MCF 10A (cell line): ENCODE measurements at regions of chr14 and their contacts with region 1.

Region 1: GRCh38 chr14:92039719-92040430 is at the start of gene TRIP11:
- DNase-seq: peak; percentile 91
- H3K4me3 Mint-ChIP-seq: peak within 1 kb of the TSS; percentile 97
- H3K27ac Mint-ChIP-seq: peak within 1 kb of the TSS; percentile 99
- H3K4me1 Mint-ChIP-seq: peaks cover 20% of the 10 kb centered on the region
- H3K27me3 Mint-ChIP-seq: no peaks in the 10 kb centered on the region
- CTCF ChIP-seq: no peak
- total RNA-seq, gene TRIP11: 65.8 and 73.6 TPM in 2 replicates

Region 2: GRCh38 chr14:91872517-91873470 is 167.1 kb before region 1 on chr14:
- CTCF ChIA-PET with region 1: no interaction called
- POLR2A ChIA-PET with region 1: no interaction called
- intact Hi-C with region 1: no loop called
- DNase-seq: peak; percentile 98
- H3K4me3 Mint-ChIP-seq: no peak overlapping the region
- H3K27ac Mint-ChIP-seq: no peak overlapping the region
- H3K4me1 Mint-ChIP-seq: peaks cover 17% of the 10 kb centered on the region
- H3K27me3 Mint-ChIP-seq: no peaks in the 10 kb centered on the region
- CTCF ChIP-seq: no peak

Region 3: GRCh38 chr14:91947471-91948184 is 92.2 kb before region 1 on chr14 and contains the start of gene FBLN5:
- CTCF ChIA-PET with region 1: no interaction called
- POLR2A ChIA-PET with region 1: no interaction called
- intact Hi-C with region 1: no loop called
- DNase-seq: peak; percentile 60
- H3K4me3 Mint-ChIP-seq: peak within 1 kb of the TSS; percentile 70
- H3K27ac Mint-ChIP-seq: no peak within 1 kb of the TSS
- H3K4me1 Mint-ChIP-seq: peaks cover 11% of the 10 kb centered on the region
- H3K27me3 Mint-ChIP-seq: no peaks in the 10 kb centered on the region
- CTCF ChIP-seq: no peak
- total RNA-seq, gene FBLN5: 4.3 and 14.8 TPM in 2 replicates

Region 4: DNA sequence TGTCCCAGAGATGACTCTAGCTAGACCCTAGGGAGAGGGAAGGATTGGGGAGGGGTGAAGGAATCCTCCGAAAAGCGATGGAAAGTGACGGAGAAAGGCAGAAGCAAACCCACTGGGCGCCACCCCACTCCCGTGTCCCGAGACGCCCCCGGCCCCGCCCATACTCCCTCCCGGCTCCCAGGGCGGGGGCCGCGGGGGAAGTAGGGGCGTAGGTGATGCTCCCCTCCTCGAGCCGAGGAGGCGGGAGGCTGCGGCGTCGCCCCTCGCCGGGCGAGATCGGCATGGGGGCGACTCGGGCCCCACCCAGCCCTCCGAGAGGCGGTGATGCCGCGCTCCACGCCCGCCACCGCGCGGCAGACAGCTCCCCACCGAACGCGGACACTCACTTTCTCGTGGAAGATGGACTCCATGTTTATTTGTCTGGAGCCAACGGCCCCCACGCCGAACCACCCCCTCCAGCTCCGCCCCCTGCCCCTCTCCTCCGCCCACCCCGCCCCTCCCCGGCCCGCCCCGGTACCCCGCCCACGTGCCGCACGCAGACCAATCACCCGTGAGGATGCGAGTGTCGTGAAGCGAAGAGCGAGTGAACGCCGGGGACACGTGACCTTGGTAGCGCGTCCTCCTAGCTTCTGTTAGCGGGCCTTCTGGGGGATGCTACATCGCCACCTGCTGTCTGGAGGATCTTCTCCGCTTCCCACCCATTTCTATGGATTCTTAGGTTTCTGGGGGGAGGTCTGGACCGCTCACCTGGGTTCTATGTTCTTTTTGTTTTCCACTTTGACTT is 66.5 kb after region 1 on chr14 and contains the start of gene ATXN3:
- CTCF ChIA-PET with region 1: no interaction called
- POLR2A ChIA-PET with region 1: interaction called, 67 read pairs
- intact Hi-C with region 1: loop called (anchors 2 kb)
- DNase-seq: peak; percentile 98
- H3K4me3 Mint-ChIP-seq: peak within 1 kb of the TSS; percentile 97
- H3K27ac Mint-ChIP-seq: peak within 1 kb of the TSS; percentile 93
- H3K4me1 Mint-ChIP-seq: peaks cover 24% of the 10 kb centered on the region
- H3K27me3 Mint-ChIP-seq: no peaks in the 10 kb centered on the region
- CTCF ChIP-seq: peak; percentile 52
- total RNA-seq, gene ATXN3: 24.9 and 31.6 TPM in 2 replicates

Region 5: DNA sequence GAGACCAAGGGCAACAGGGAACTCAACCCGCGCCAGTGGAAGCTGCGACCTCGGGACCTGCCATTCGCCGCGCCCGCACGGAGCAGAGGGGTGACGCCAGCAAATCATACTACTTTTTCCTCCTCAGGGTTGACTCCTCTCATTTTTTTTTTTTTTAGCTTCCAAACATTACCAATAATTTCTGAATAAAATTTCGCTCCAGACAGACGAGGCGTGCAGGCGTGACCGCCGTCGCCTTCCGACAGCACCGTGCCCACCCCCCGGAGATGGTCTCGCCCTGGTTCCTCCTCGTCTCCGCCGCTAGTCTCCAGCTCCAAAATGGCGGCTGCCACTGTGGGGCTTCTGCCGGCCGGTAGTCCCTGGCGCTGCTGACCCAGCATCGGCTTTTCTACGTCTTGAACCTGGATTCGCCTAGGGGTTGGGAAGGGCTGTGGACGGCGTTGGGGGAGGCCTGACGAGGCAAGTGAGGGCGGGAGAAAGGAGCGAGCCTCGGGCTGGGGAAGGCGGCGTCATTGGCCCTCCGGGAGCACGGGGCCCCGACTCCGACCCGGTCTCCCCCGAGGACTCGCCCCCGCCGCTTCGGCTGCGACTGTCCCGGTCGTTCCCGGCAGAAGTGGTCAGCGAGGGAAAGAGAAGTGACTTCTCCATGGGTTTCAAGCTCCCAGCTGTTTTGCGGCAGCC is 81.9 kb after region 1 on chr14 and contains the starts of genes CPSF2 and NDUFB1:
- CTCF ChIA-PET with region 1: no interaction called
- POLR2A ChIA-PET with region 1: interaction called, 41 read pairs
- intact Hi-C with region 1: no loop called
- DNase-seq: peak; percentile 79
- H3K4me3 Mint-ChIP-seq: peak within 1 kb of the TSS; percentile 82
- H3K27ac Mint-ChIP-seq: peak within 1 kb of the TSS; percentile 99
- H3K4me1 Mint-ChIP-seq: peaks cover 18% of the 10 kb centered on the region
- H3K27me3 Mint-ChIP-seq: no peaks in the 10 kb centered on the region
- CTCF ChIP-seq: no peak
- total RNA-seq, gene CPSF2: 116 and 121 TPM in 2 replicates
- total RNA-seq, gene NDUFB1: 130 and 134 TPM in 2 replicates

Region 6: DNA sequence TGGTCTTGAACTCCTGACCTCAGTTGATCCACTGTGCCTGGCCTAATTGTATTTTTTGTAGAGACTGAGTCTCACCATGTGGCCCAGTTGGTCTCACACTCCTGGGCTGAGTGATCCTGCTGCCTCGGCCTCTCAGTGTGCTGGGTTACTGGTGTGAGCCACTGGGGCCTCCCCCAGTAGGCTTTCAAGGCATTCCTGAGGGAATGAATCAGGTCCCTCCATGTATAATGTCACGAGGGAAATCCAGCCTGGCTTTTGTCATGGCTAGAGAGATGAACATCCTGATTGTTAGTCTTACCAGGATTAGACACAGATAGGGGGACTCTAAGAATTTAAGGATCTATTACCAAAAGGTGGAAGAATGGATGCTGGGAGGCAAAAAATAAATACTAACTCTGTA is 133.8 kb after region 1 on chr14:
- CTCF ChIA-PET with region 1: no interaction called
- POLR2A ChIA-PET with region 1: no interaction called
- intact Hi-C with region 1: no loop called
- DNase-seq: no peak
- H3K4me3 Mint-ChIP-seq: no peak overlapping the region
- H3K27ac Mint-ChIP-seq: no peak overlapping the region
- H3K4me1 Mint-ChIP-seq: no peaks in the 10 kb centered on the region
- H3K27me3 Mint-ChIP-seq: no peaks in the 10 kb centered on the region
- CTCF ChIP-seq: no peak